Heart right ventricle (tissue), 16 donors: ENCODE measurements at regions of chr9 and their contacts with region 1.

Region 1: GRCh38 chr9:94139672-94140417 is 55.6 kb downstream of the PTPDC1 start:
- DNase-seq: peak; percentile 84 to 90
- ATAC-seq: peak; percentile 81 to 96 (median 88)
- H3K4me3 ChIP-seq: peak overlapping the region in 4 of 10 donors; percentile 11 to 28 (median 18)
- H3K27ac ChIP-seq: peak overlapping the region; percentile 66 to 91 (median 81)
- H3K4me1 ChIP-seq: peaks cover 12 to 48% (median 41%) of the 10 kb centered on the region in 9 donors
- H3K27me3 ChIP-seq: no peaks in the 10 kb centered on the region
- CTCF ChIP-seq: no peak

Region 2: DNA sequence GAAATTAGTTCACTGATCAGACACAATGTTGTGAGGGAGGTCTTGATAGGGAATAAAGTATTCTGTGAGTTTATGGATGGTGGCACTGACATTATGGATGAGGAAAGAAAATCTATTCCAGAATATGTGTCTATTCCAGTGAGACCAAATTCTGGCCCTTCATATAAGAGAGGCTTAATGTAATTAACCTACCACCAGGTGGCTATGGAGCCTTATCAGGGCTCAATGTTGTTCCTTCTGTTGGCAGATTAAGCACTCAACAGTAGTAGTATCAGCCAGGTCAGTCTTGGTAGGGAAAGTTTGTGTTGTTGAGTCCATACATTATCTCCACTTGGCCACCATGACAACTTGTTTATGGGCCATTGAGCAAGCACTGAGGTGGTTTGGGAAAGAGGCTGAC is 143.0 kb before region 1 on chr9:
- intact Hi-C with region 1: no loop called
- DNase-seq: no peak
- ATAC-seq: no peak
- H3K4me3 ChIP-seq: no peak overlapping the region
- H3K27ac ChIP-seq: no peak overlapping the region
- H3K4me1 ChIP-seq: no peaks in the 10 kb centered on the region
- H3K27me3 ChIP-seq: peaks cover 0 to 4% (median 0%) of the 10 kb centered on the region in 7 donors
- CTCF ChIP-seq: no peak

Region 3: GRCh38 chr9:94084314-94084713 is 55.5 kb before region 1 on chr9 and contains the start of gene PTPDC1:
- intact Hi-C with region 1: loop called in 3 of 10 experiments (anchors 2 to 10 kb)
- DNase-seq: peak; percentile 11 to 54
- ATAC-seq: peak in 6 of 8 donors; percentile 43 to 58 (median 52)
- H3K4me3 ChIP-seq: peak within 1 kb of the TSS in 3 of 10 donors; percentile 4 to 40 (median 33)
- H3K27ac ChIP-seq: peak within 1 kb of the TSS in 5 of 10 donors; percentile 11 to 73 (median 56)
- H3K4me1 ChIP-seq: peaks cover 0 to 62% (median 32%) of the 10 kb centered on the region in 9 donors
- H3K27me3 ChIP-seq: no peaks in the 10 kb centered on the region
- CTCF ChIP-seq: no peak
- total RNA-seq, gene PTPDC1: 6.3 to 14.7 (median 9.5) TPM

Region 4: GRCh38 chr9:94157050-94157764 is 17.4 kb after region 1 on chr9:
- intact Hi-C with region 1: loop called in 1 of 10 experiments (anchors 2 kb)
- DNase-seq: peak; percentile 71 to 90
- ATAC-seq: peak; percentile 81 to 90 (median 88)
- H3K4me3 ChIP-seq: no peak overlapping the region
- H3K27ac ChIP-seq: peak overlapping the region; percentile 0 to 77 (median 68)
- H3K4me1 ChIP-seq: peaks cover 13 to 33% (median 29%) of the 10 kb centered on the region in 9 donors
- H3K27me3 ChIP-seq: no peaks in the 10 kb centered on the region
- CTCF ChIP-seq: no peak

Region 5: DNA sequence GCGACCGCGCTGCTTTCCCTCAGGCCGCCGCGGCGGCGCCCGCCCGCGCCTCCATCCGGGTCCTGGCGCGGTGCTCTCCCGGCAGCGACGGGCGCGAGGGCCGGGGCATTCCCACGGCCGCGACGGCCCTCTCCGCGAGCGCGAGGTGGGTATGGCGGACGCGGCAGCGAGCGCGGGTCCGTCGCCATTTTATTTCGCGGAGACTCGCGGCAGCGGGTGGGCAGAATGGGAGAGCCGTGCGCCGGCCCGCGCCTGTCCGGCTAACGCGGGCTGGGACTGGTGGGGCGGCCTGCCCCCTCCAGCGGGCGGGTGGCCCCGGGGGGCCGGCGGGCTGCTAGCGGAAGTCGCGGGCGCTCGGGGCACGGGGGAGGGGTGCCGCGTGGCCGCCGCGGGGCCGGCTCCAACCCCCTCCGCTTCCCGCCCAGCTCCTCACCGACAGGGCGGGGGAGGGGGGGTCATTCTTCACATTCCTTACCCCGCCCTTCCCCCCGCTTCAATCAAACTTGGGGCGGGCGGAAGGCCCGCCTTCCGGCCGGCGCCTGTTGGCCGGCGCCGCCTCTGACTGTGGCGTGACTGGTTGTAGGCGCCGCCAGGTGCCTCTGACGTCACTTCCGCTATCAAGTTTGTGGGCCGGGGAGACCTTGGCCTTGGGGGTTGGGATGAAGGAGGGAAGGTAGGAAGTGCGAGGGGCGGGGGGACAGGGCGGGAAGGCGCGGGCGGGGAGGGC is 26.6 kb after region 1 on chr9:
- intact Hi-C with region 1: loop called in 3 of 10 experiments (anchors 1 to 2 kb)
- DNase-seq: peak; percentile 96 to 99
- ATAC-seq: peak; percentile 80 to 92 (median 87)
- H3K4me3 ChIP-seq: peak overlapping the region; percentile 54 to 92 (median 75)
- H3K27ac ChIP-seq: peak overlapping the region; percentile 99 to 100 (median 100)
- H3K4me1 ChIP-seq: peaks cover 5 to 48% (median 38%) of the 10 kb centered on the region in 9 donors
- H3K27me3 ChIP-seq: no peaks in the 10 kb centered on the region
- CTCF ChIP-seq: peak in 5 of 9 donors; percentile 6 to 38 (median 29)

Region 6: DNA sequence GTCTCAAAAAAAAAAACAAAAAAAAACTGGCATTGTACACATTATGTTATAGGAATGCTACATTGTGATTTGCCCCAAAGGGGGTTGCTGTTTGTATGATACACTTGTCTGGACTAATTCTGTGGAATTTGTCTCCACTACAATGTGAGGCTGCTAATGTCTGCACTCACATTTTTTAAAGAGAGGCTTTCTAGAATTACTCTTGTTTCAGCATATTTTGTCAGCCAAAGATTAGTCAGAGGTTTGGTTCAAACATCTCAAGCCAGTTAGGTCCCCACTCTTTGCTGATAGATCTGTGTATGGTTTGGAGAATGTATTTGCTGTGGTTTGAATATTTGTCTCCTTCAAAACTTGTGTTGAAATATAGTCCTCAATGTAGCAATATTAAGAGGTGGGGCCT is 59.9 kb after region 1 on chr9:
- intact Hi-C with region 1: no loop called
- DNase-seq: no peak
- ATAC-seq: no peak
- H3K4me3 ChIP-seq: no peak overlapping the region
- H3K27ac ChIP-seq: no peak overlapping the region
- H3K4me1 ChIP-seq: peaks cover 0 to 5% (median 0%) of the 10 kb centered on the region in 9 donors
- H3K27me3 ChIP-seq: no peaks in the 10 kb centered on the region
- CTCF ChIP-seq: no peak